Esophagus muscularis mucosa (tissue), 4 donors: ENCODE measurements at regions of chr17 and their contacts with region 1.

Region 1: GRCh38 chr17:39209317-39210092 is 9.4 kb downstream of the RPL19 start:
- DNase-seq: no peak
- H3K4me3 ChIP-seq: peak overlapping the region; percentile 48 to 58 (median 58)
- H3K27ac ChIP-seq: peak overlapping the region; percentile 37 to 73 (median 60)
- H3K4me1 ChIP-seq: peaks cover 14 to 34% (median 27%) of the 10 kb centered on the region in 4 donors
- H3K27me3 ChIP-seq: peaks cover 0 to 5% (median 0%) of the 10 kb centered on the region in 4 donors
- CTCF ChIP-seq: no peak
- EP300 ChIP-seq: no peak
- POLR2A ChIP-seq: no peak

Region 2: GRCh38 chr17:39244600-39245570 is 35.4 kb after region 1 on chr17:
- intact Hi-C with region 1: loop called (anchors 5 kb)
- DNase-seq: peak; percentile 96
- H3K4me3 ChIP-seq: no peak overlapping the region
- H3K27ac ChIP-seq: no peak overlapping the region
- H3K4me1 ChIP-seq: peaks cover 6 to 14% (median 10%) of the 10 kb centered on the region in 4 donors
- H3K27me3 ChIP-seq: peaks cover 0 to 38% (median 0%) of the 10 kb centered on the region in 4 donors
- CTCF ChIP-seq: peak; percentile 88 to 95 (median 93)
- EP300 ChIP-seq: no peak
- POLR2A ChIP-seq: no peak